HAP-1 (cell line): ENCODE measurements at regions of chr15 and their contacts with region 1.

Region 1: DNA sequence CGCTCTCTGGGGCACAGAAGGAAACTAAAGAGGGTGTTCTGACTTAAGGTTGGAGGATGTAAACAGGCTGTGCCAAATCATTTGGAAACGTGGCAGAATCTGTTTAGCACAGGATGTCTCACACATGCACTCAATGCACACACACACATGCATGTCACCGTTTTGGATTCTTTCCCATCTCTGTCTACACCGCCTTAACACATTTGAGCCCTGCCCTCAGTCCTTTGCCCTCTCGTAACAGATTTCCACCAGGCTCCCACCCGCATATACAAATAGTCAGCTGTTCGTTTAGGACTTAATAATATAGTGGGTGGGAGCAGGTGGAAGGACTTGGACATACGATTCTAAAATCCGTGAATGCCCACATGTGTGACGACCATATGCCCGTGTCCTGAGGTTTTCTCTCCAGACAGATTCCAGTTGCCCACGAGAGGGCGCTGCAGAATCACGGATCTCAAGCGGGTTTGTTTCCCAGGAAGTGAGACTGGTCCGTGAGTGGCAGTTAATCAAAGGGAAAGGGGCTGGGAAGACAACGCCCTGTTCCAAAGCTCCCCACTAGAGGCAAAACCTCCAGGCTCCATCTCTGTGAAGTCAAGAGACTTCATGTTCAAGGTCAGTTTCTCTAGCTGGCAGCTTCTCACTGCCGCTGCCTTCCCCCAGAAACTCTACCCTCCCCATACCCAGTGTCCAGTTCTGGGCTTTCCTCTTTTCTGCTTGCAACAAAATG is 44.5 kb downstream of the NOX5 start:
- DNase-seq: peak; percentile 99
- H3K4me3 ChIP-seq: no peak overlapping the region
- H3K4me1 ChIP-seq: peaks cover 3% of the 10 kb centered on the region; the same call in 1 of the 2 replicates
- H3K27me3 ChIP-seq: peaks cover 3% of the 10 kb centered on the region; the same call in 1 of the 2 replicates

Region 2: GRCh38 chr15:68543165-68544008 is 515.6 kb before region 1 on chr15:
- in situ Hi-C with region 1: no loop called
- DNase-seq: no peak
- H3K4me3 ChIP-seq: no peak overlapping the region
- H3K4me1 ChIP-seq: no peaks in the 10 kb centered on the region
- H3K27me3 ChIP-seq: peaks cover 8% of the 10 kb centered on the region

Region 3: DNA sequence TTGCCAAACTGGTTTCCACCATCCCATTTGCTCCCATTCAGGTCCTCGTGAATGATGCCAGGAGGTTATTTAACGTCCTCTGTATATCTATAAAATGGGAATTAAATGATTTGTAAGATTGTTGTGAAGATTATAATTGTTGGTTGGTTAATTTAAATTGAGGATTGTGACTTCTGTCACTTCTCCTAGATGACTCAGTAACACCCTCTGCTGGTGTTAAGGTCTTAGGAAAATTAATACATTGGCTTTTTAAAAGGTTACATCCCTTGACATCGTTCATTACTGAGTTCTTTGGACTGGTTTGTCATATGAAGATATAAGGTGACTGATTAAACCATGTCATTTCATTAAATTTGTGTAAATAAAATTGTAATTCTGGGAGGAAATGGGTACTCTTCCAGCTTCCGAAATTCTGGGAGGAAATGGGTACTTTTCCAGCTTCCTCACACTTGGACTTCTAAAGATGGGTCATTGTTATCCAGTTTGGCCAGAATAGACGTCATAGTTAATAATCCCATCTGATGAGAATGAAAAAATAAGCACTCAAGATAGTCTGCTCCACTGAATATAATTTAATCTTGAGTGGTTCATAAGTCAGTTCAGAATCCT is 206.5 kb after region 1 on chr15:
- in situ Hi-C with region 1: loop called (anchors 5 kb)
- DNase-seq: peak in 1 of 2 experiments; percentile 72
- H3K4me3 ChIP-seq: no peak overlapping the region
- H3K4me1 ChIP-seq: no peaks in the 10 kb centered on the region
- H3K27me3 ChIP-seq: no peaks in the 10 kb centered on the region

Region 4: GRCh38 chr15:69394556-69395282 is 335.7 kb after region 1 on chr15:
- in situ Hi-C with region 1: loop called (anchors 5 kb)
- DNase-seq: peak; percentile 83 to 98
- H3K4me3 ChIP-seq: no peak overlapping the region
- H3K4me1 ChIP-seq: peaks cover 4% of the 10 kb centered on the region
- H3K27me3 ChIP-seq: no peaks in the 10 kb centered on the region

Region 5: DNA sequence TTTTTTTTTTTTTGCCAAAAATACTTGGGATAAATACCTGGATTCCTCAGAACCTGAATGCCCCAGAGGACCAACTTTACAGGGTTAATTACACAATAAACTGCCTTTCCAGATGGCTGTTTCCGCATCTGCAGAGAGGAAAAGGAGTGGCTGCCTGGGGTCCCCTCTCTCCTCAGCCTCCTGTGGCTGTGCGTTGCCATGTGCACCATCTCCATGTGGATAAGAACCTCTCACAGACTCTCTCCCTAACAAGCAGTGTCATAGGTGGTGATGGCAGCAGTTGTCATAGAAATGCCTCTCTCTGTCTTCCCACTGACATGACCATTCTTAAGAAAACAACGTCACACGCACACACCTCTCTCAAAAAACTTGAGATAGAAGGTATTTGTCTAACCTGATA is 573.0 kb after region 1 on chr15:
- in situ Hi-C with region 1: no loop called
- DNase-seq: no peak
- H3K4me3 ChIP-seq: no peak overlapping the region
- H3K4me1 ChIP-seq: no peaks in the 10 kb centered on the region
- H3K27me3 ChIP-seq: peaks cover 11% of the 10 kb centered on the region